ENCODE measurements at regions of chr7 and their contacts with region 1.

Region 1: GRCh38 chr7:16212610-16213009 is 208.7 kb downstream of the CRPPA start:
- DNase-seq: no peak
- H3K4me3 Mint-ChIP-seq: peak overlapping the region; percentile 2
- H3K27ac Mint-ChIP-seq: peak overlapping the region; percentile 44
- H3K4me1 Mint-ChIP-seq: peaks cover 14% of the 10 kb centered on the region
- H3K27me3 Mint-ChIP-seq: no peaks in the 10 kb centered on the region
- CTCF ChIP-seq: no peak

Region 2: DNA sequence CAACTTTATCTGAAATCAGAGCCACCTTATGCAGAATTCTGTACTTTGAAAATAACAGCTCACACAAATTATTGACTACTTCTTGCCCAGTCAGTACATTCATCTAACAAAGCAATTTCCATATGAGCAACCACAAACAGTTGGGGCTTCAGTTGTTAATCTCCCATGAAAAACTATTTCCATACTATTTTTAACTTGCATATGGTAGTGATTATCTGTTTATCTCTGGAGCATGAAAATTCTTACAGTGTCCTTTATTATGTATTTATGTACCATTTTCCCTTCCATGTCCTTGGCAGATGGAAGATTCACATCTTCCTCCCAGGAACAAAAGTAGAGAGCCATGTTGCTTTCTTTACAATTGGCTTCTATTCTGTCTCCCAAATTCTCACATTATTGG is 77.0 kb before region 1 on chr7:
- CTCF ChIA-PET with region 1: no interaction called
- intact Hi-C with region 1: loop called (anchors 5 kb)
- DNase-seq: no peak
- H3K4me3 Mint-ChIP-seq: no peak overlapping the region
- H3K27ac Mint-ChIP-seq: no peak overlapping the region
- H3K4me1 Mint-ChIP-seq: peaks cover 8% of the 10 kb centered on the region
- H3K27me3 Mint-ChIP-seq: no peaks in the 10 kb centered on the region
- CTCF ChIP-seq: no peak

Region 3: GRCh38 chr7:16450366-16450765 is 237.8 kb after region 1 on chr7:
- CTCF ChIA-PET with region 1: no interaction called
- intact Hi-C with region 1: no loop called
- DNase-seq: no peak
- H3K4me3 Mint-ChIP-seq: no peak overlapping the region
- H3K27ac Mint-ChIP-seq: no peak overlapping the region
- H3K4me1 Mint-ChIP-seq: peaks cover 25% of the 10 kb centered on the region
- H3K27me3 Mint-ChIP-seq: no peaks in the 10 kb centered on the region
- CTCF ChIP-seq: no peak